Activated CD8-positive, alpha-beta T cell treated with anti-CD3 and anti-CD28 coated beads for 36 hours (primary cell): ENCODE measurements at regions of chr10 and their contacts with region 1.

Region 1: DNA sequence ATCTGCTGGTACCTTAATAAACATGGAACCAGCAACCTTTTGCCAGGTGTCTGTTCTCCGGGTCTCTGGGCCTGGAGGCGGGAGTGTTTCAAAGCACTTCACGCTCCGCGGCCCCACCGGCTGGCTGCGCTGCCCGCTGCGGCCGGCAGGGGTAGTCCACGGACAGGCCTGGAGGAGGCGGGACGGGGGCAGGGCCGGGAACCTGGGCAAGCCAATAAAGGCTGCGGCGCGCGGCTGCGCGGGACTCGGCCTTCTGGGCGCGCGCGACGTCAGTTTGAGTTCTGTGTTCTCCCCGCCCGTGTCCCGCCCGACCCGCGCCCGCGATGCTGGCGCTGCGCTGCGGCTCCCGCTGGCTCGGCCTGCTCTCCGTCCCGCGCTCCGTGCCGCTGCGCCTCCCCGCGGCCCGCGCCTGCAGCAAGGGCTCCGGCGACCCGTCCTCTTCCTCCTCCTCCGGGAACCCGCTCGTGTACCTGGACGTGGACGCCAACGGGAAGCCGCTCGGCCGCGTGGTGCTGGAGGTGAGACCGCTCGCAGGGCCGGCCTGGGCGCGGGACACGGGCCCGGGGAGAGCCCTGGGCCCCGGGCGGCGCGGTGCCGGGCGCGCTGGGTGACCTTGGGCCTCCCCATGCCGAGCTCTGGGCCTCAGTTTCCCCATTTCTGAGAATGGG is at the start of gene PPIF:
- DNase-seq: peak; percentile 95
- ATAC-seq: peak; percentile 96
- H3K4me3 Mint-ChIP-seq: peak within 1 kb of the TSS; percentile 86
- H3K27ac Mint-ChIP-seq: peak within 1 kb of the TSS; percentile 94
- H3K4me1 Mint-ChIP-seq: peaks cover 26% of the 10 kb centered on the region
- H3K27me3 Mint-ChIP-seq: no peaks in the 10 kb centered on the region
- CTCF ChIP-seq: peak; percentile 98
- total RNA-seq, gene PPIF: 81.5 to 88.6 TPM

Region 2: DNA sequence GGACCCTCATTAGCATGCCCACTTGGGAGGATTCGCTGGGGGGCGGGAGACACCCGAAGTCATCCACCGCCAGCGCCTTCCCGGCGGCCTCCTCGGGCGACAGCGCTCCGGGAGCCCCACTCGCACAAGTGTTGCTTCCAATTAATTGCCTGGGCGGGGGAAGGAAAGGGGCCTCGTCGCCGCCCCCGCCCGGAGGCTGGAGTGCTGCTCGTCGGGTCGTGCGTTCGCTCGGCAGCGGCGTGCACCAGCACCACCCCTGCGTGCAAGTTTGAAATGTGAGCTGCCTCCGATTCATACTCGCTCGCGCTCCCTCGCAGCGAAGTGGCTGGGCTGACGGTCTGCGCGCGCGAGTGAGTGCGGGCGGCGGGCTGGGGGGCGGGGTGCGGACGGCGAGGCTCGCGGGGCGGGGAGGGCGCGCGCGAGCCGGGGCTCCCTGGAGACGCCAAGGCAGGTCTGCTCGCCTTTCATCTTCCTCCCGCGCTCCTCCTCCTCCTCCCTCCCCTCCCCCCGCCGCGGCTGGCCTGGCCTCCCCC is 104.7 kb before region 1 on chr10:
- CTCF ChIA-PET with region 1: interaction called, 4 read pairs
- POLR2A ChIA-PET with region 1: interaction called, 26 read pairs
- intact Hi-C with region 1: no loop called
- DNase-seq: peak; percentile 82
- ATAC-seq: peak; percentile 49
- H3K4me3 Mint-ChIP-seq: peak overlapping the region; percentile 78
- H3K27ac Mint-ChIP-seq: peak overlapping the region; percentile 88
- H3K4me1 Mint-ChIP-seq: peaks cover 59% of the 10 kb centered on the region
- H3K27me3 Mint-ChIP-seq: no peaks in the 10 kb centered on the region
- CTCF ChIP-seq: no peak

Region 3: DNA sequence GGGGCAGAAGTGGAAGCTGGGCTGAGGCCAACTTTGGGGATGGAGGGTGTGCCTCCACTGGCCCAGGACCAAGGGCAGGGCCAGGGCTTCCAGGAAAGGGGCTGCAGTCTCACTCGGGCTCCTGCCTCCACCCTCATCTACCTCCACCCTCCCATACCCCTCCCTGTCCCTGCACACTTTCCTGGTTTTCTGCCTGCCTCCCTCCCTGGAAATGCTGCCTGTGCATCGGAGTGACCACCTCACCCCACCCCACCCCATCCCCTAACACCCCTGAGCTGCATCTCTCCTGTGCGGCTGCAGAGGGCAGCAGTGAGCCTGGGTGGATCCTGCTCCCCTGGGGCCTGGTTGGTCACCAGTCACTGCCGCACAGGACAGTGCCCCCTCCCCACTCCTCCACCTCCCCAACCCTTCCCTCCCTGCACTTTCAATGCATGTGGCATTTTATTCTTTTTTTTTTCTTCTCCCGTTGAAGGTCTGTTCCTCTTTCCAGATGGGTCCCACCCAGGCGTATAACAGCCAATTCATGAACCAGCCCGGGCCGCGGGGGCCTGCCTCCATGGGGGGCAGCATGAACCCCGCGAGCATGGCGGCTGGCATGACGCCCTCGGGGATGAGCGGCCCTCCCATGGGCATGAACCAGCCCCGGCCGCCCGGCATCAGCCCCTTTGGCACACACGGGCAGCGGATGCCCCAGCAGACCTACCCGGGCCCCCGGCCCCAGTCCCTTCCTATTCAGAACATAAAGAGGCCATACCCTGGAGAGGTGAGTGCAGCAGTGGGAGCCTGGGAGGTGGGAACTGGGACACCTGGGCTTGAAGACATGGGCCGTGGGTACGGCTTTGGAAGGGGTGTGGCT is 54.2 kb before region 1 on chr10:
- CTCF ChIA-PET with region 1: interaction called, 5 read pairs
- POLR2A ChIA-PET with region 1: interaction called, 6 read pairs
- intact Hi-C with region 1: loop called (anchors 5 kb)
- DNase-seq: peak; percentile 42
- ATAC-seq: peak; percentile 84
- H3K4me3 Mint-ChIP-seq: no peak overlapping the region
- H3K27ac Mint-ChIP-seq: no peak overlapping the region
- H3K4me1 Mint-ChIP-seq: peaks cover 13% of the 10 kb centered on the region
- H3K27me3 Mint-ChIP-seq: no peaks in the 10 kb centered on the region
- CTCF ChIP-seq: peak; percentile 66

Region 4: GRCh38 chr10:79322616-79323543 is 24.5 kb before region 1 on chr10:
- CTCF ChIA-PET with region 1: interaction called, 27 read pairs
- POLR2A ChIA-PET with region 1: interaction called, 155 read pairs
- intact Hi-C with region 1: loop called (anchors 5 kb)
- DNase-seq: peak; percentile 93
- ATAC-seq: peak; percentile 75
- H3K4me3 Mint-ChIP-seq: peak overlapping the region; percentile 38
- H3K27ac Mint-ChIP-seq: peak overlapping the region; percentile 94
- H3K4me1 Mint-ChIP-seq: peaks cover 66% of the 10 kb centered on the region
- H3K27me3 Mint-ChIP-seq: no peaks in the 10 kb centered on the region
- CTCF ChIP-seq: no peak

Region 5: DNA sequence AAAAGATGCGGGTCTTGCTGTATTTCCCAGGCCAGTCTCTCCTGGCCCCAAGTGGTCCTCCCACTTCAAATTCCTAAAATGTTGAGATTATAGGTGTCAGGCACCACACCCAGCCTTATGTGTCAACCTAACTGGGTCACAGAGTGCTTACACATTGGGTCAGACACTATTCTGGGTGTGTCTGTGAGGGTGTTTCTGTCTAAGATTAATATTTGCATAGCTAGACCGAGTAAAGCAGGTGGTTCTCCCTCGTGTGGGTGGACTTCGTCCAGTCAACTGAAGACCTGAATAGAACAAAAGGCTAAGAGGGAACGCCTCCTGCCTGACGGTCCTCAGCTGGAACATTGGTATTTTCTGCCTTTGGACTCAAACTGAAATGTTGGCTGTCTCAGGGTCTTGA is 11.4 kb after region 1 on chr10:
- CTCF ChIA-PET with region 1: interaction called, 6 read pairs
- POLR2A ChIA-PET with region 1: interaction called, 22 read pairs
- intact Hi-C with region 1: no loop called
- DNase-seq: no peak
- ATAC-seq: no peak
- H3K4me3 Mint-ChIP-seq: no peak overlapping the region
- H3K27ac Mint-ChIP-seq: no peak overlapping the region
- H3K4me1 Mint-ChIP-seq: peaks cover 38% of the 10 kb centered on the region
- H3K27me3 Mint-ChIP-seq: no peaks in the 10 kb centered on the region
- CTCF ChIP-seq: no peak